ENCODE measurements at regions of chr19 and their contacts with region 1.

Region 1: GRCh38 chr19:21851596-21852345 is 15.8 kb upstream of the ZNF43 start:
- DNase-seq: peak; percentile 93
- ATAC-seq: peak; percentile 99
- H3K4me3 Mint-ChIP-seq: peak overlapping the region; percentile 93
- H3K27ac Mint-ChIP-seq: peak overlapping the region; percentile 92
- H3K4me1 Mint-ChIP-seq: peaks cover 29% of the 10 kb centered on the region
- H3K27me3 Mint-ChIP-seq: no peaks in the 10 kb centered on the region

Region 2: GRCh38 chr19:21767065-21767800 is 84.5 kb before region 1 on chr19 and contains the start of gene ZNF100:
- CTCF ChIA-PET with region 1: interaction called, 5 read pairs
- POLR2A ChIA-PET with region 1: interaction called, 13 read pairs
- DNase-seq: peak; percentile 94
- ATAC-seq: peak; percentile 99
- H3K4me3 Mint-ChIP-seq: peak within 1 kb of the TSS; percentile 92
- H3K27ac Mint-ChIP-seq: peak within 1 kb of the TSS; percentile 90
- H3K4me1 Mint-ChIP-seq: peaks cover 21% of the 10 kb centered on the region
- H3K27me3 Mint-ChIP-seq: no peaks in the 10 kb centered on the region
- total RNA-seq, gene ZNF100: 21.6 to 28.4 TPM

Measured in activated CD8-positive, alpha-beta T cell treated with anti-CD3 and anti-CD28 coated beads, Interleukin-2, amount 10 ng/mL, durations not matched to agents 7 days and 5 days (primary cell).